ENCODE measurements at regions of chr19 and their contacts with region 1.

Region 1: GRCh38 chr19:12564016-12564664 is 12.9 kb upstream of the ZNF564 start:
- DNase-seq: peak; percentile 76
- H3K4me3 ChIP-seq: no peak overlapping the region
- CTCF ChIP-seq: peak; percentile 97

Region 2: GRCh38 chr19:12551060-12551832 is 12.9 kb before region 1 on chr19 and contains the start of gene ZNF564:
- CTCF ChIA-PET with region 1: interaction called, 25 read pairs
- POLR2A ChIA-PET with region 1: no interaction called
- DNase-seq: peak; percentile 89
- H3K4me3 ChIP-seq: peak within 1 kb of the TSS; percentile 92
- CTCF ChIP-seq: no peak

Region 3: GRCh38 chr19:12610540-12611360 is 46.6 kb after region 1 on chr19 and contains the starts of genes ZNF490 and ZNF791:
- CTCF ChIA-PET with region 1: interaction called, 12 read pairs
- POLR2A ChIA-PET with region 1: no interaction called
- DNase-seq: peak; percentile 73
- H3K4me3 ChIP-seq: peak within 1 kb of the TSS; percentile 100
- CTCF ChIP-seq: no peak

Region 4: DNA sequence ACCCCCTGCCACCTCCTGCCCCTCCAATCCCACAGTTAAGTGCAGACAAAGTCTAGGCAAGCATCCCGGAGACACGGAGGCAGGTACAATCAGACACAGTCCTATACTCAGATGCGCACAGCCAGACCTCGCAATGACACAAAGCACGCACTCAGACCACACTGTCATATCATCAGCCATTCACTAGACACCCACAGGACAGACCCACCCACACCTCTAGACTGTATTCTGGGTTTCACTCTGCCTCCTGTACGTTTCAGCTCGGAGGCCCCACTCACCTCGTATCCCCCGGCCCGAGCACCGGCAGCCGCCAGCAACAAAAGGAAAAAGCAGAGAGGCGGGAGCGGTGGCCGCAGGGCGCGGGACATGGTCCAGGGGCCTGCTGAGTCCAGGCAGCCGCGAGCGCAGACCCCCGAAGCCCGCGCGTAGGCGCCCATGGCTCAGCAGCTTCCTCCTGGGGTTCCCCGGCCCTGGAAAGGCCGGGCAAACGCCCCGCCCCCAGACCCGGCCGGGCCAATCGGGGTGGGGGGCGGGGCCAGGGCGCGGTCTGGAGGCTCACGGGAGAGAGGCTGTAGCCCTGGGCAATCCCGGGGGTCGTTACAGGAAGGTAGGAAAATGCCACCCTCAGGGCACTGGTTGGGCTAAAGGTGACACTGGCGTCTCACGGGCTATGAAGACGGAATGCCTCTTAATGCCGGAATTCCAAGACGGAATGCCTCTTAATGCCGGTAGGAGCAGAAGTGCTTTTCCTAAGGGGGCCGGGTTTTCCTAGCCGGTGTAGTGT is 102.3 kb after region 1 on chr19 and contains the starts of genes MAN2B1 and WDR83:
- CTCF ChIA-PET with region 1: interaction called, 224 read pairs
- POLR2A ChIA-PET with region 1: interaction called, 5 read pairs
- DNase-seq: no peak
- H3K4me3 ChIP-seq: peak within 1 kb of the TSS; percentile 77
- CTCF ChIP-seq: no peak

Region 5: DNA sequence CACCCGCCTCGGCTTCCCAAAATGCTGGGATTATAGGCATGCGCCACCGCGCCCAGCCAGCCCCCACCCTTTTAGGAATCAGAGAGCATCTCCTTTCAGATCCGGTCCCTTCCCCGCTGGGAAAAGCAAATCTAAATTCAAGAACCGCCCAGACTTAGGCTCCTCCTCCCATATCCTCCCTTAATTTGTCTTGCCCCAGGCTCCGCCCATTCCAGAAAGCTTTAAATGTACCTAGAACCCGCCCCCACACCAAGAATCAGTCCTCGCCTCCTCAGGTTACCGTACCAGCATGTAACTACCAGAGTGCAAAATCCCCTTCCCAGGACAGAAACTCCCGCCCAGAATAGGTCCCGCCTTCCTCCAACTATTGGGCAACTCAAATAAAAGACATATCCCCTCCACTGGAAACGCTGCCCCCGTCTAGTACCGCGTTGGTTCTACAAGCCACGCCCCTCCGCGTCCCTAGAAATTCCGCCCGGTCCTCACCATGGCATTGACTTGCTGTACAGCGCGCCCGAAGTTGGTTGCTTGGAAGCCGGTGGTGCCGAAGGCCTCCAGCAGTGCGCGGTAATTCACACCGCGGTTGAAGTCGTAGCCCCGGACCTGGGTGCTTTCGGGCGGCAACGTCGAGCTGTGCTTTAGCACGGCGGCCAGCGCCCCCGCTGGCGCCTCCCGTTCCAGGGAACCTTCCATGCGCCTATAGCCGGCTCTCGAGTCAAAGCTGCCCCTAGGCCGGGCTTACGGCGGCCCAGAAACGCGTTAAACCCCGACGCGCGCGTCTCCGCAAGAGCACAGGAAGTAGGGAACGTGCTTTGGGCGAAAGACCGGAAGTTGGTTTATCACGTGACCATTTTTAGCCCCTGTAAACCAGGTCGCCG is 117.2 kb after region 1 on chr19 and contains the start of gene DHPS:
- CTCF ChIA-PET with region 1: interaction called, 224 read pairs
- POLR2A ChIA-PET with region 1: no interaction called
- DNase-seq: peak; percentile 89
- H3K4me3 ChIP-seq: peak within 1 kb of the TSS; percentile 98
- CTCF ChIP-seq: no peak

Measured in AG04449 (cell line).